Vagina (tissue), 2 donors: ENCODE measurements at regions of chr17 and their contacts with region 1.

Region 1: GRCh38 chr17:55527540-55528118 is 16.4 kb upstream of the SMIM36 start:
- DNase-seq: no peak
- H3K4me3 ChIP-seq: no peak overlapping the region
- H3K27ac ChIP-seq: no peak overlapping the region
- H3K4me1 ChIP-seq: no peaks in the 10 kb centered on the region
- H3K27me3 ChIP-seq: no peaks in the 10 kb centered on the region
- CTCF ChIP-seq: peak; percentile 22 to 52 (median 43)
- POLR2A ChIP-seq: no peak

Region 2: DNA sequence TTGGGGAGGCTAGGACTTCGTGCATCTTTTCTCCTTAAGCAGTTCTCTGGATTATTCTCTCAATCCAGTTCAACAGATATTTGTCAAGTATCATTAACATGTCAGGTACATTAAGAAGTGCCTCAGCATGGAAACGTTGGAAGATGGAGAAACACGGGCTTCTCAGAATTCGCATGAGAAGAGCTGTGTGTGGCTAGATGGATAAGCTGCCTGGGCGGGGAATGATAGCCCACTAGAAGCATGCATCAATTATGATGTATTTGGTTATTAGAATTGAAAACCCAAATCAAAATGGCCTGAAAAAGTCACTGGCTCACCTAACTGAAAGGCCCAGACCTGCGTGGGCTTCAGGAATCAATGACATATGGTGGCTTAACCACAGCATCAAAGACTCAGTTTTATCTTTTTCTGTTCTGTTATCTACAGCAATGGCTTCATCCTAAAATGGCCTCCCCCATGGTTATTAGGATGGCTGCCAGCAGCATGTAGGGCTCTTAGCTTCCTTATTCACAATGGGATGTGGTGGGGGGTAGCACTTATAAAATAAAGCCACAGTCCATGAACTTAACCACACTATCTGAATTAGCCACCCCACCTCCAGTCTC is 149.9 kb before region 1 on chr17:
- intact Hi-C with region 1: no loop called
- DNase-seq: no peak
- H3K4me3 ChIP-seq: no peak overlapping the region
- H3K27ac ChIP-seq: no peak overlapping the region
- H3K4me1 ChIP-seq: no peaks in the 10 kb centered on the region
- H3K27me3 ChIP-seq: no peaks in the 10 kb centered on the region
- CTCF ChIP-seq: no peak
- POLR2A ChIP-seq: no peak

Region 3: GRCh38 chr17:55398689-55399088 is 128.9 kb before region 1 on chr17:
- intact Hi-C with region 1: no loop called
- DNase-seq: no peak
- H3K4me3 ChIP-seq: no peak overlapping the region
- H3K27ac ChIP-seq: no peak overlapping the region
- H3K4me1 ChIP-seq: no peaks in the 10 kb centered on the region
- H3K27me3 ChIP-seq: no peaks in the 10 kb centered on the region
- CTCF ChIP-seq: no peak
- POLR2A ChIP-seq: no peak

Region 4: GRCh38 chr17:55601874-55602364 is 74.3 kb after region 1 on chr17:
- intact Hi-C with region 1: loop called (anchors 10 kb)
- DNase-seq: no peak
- H3K4me3 ChIP-seq: no peak overlapping the region
- H3K27ac ChIP-seq: no peak overlapping the region
- H3K4me1 ChIP-seq: peaks cover 7% of the 10 kb centered on the region
- H3K27me3 ChIP-seq: no peaks in the 10 kb centered on the region
- CTCF ChIP-seq: peak in 2 of 3 experiments; percentile 12 to 62
- POLR2A ChIP-seq: no peak

Region 5: DNA sequence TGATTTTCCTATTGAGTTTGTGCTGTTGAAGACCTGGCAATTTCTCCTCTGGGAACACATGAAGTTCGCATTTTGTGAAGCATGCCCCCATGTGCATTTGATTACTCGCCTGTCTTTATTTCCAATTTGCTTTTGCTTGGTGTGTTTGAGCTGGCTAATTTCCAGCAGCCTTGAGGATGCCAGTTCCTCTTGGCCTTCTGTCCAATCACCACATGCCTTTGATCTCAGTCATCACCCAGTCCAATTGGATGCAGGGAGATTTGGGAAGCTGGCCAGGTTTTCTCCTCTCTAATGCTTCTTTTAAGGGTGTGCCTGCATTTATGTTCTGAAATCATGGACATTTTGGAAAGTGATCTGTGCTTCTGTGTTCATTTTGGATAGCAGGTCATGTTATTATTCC is 198.8 kb after region 1 on chr17:
- intact Hi-C with region 1: loop called (anchors 10 kb)
- DNase-seq: no peak
- H3K4me3 ChIP-seq: no peak overlapping the region
- H3K27ac ChIP-seq: peak overlapping the region; percentile 57
- H3K4me1 ChIP-seq: peaks cover 60% of the 10 kb centered on the region
- H3K27me3 ChIP-seq: no peaks in the 10 kb centered on the region
- CTCF ChIP-seq: no peak
- POLR2A ChIP-seq: no peak

Region 6: GRCh38 chr17:55770148-55770870 is 242.7 kb after region 1 on chr17:
- intact Hi-C with region 1: loop called (anchors 5 kb)
- DNase-seq: no peak
- H3K4me3 ChIP-seq: no peak overlapping the region
- H3K27ac ChIP-seq: peak overlapping the region; percentile 51
- H3K4me1 ChIP-seq: peaks cover 15% of the 10 kb centered on the region
- H3K27me3 ChIP-seq: no peaks in the 10 kb centered on the region
- CTCF ChIP-seq: peak; percentile 31 to 71 (median 61)
- POLR2A ChIP-seq: no peak